Heart right ventricle (tissue), 16 donors: ENCODE measurements at regions of chr1 and their contacts with region 1.

Region 1: GRCh38 chr1:209354111-209354839 is 229.2 kb upstream of the CAMK1G start:
- DNase-seq: peak; percentile 25 to 81
- ATAC-seq: peak; percentile 81 to 94 (median 89)
- H3K4me3 ChIP-seq: no peak overlapping the region
- H3K27ac ChIP-seq: no peak overlapping the region
- H3K4me1 ChIP-seq: peaks cover 0 to 13% (median 0%) of the 10 kb centered on the region in 9 donors
- H3K27me3 ChIP-seq: no peaks in the 10 kb centered on the region
- CTCF ChIP-seq: peak; percentile 55 to 90 (median 84)

Region 2: GRCh38 chr1:209123601-209124000 is 230.7 kb before region 1 on chr1:
- intact Hi-C with region 1: no loop called
- DNase-seq: no peak
- ATAC-seq: no peak
- H3K4me3 ChIP-seq: no peak overlapping the region
- H3K27ac ChIP-seq: no peak overlapping the region
- H3K4me1 ChIP-seq: no peaks in the 10 kb centered on the region
- H3K27me3 ChIP-seq: peaks cover 0 to 6% (median 0%) of the 10 kb centered on the region in 7 donors
- CTCF ChIP-seq: no peak

Region 3: DNA sequence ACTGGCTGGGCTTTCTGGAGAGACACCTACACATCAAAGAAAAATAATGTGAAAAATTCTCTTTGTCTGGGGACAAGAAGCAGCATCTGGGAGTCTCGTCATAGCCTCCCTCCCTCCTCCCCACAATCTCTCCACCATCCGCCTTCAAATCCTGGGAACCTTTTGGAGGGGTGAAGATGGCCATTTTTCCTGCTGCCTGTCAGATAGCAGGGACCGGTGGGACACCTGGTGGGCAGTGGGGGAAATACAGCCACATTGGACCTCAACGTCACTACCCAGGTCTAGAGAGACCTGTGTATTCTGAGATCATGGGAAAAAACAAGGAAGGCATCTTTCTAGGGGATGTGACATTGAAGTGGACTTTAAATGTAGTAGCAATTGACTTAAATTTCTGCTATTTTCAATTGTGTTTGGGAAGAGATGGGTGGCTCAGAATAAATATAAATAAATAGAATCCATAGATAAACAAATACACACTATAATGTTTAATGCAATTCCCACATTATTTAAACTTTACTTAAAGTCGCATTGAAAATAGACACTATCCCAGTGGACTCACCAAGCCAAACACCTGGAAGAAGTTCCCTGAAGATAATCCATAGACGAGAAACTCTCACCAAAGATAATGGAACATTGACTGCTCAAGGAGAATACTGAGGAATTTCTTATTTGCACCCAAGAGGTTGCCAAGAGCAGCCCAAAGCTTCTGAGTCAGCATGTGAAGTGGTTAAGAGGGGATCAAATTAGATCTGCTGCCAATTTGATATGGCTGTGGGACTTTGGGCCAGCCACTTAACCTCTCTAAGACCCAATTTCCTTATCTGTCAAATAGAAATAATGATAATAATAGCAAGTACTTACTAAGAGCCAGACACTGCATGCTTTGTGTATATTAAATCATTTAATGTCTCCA is 81.6 kb after region 1 on chr1:
- intact Hi-C with region 1: loop called in 2 of 10 experiments (anchors 5 kb)
- DNase-seq: peak; percentile 52 to 62
- ATAC-seq: peak in 7 of 8 donors; percentile 47 to 74 (median 67)
- H3K4me3 ChIP-seq: no peak overlapping the region
- H3K27ac ChIP-seq: no peak overlapping the region
- H3K4me1 ChIP-seq: no peaks in the 10 kb centered on the region
- H3K27me3 ChIP-seq: peaks cover 0 to 13% (median 3%) of the 10 kb centered on the region in 7 donors
- CTCF ChIP-seq: peak; percentile 38 to 83 (median 73)

Region 4: DNA sequence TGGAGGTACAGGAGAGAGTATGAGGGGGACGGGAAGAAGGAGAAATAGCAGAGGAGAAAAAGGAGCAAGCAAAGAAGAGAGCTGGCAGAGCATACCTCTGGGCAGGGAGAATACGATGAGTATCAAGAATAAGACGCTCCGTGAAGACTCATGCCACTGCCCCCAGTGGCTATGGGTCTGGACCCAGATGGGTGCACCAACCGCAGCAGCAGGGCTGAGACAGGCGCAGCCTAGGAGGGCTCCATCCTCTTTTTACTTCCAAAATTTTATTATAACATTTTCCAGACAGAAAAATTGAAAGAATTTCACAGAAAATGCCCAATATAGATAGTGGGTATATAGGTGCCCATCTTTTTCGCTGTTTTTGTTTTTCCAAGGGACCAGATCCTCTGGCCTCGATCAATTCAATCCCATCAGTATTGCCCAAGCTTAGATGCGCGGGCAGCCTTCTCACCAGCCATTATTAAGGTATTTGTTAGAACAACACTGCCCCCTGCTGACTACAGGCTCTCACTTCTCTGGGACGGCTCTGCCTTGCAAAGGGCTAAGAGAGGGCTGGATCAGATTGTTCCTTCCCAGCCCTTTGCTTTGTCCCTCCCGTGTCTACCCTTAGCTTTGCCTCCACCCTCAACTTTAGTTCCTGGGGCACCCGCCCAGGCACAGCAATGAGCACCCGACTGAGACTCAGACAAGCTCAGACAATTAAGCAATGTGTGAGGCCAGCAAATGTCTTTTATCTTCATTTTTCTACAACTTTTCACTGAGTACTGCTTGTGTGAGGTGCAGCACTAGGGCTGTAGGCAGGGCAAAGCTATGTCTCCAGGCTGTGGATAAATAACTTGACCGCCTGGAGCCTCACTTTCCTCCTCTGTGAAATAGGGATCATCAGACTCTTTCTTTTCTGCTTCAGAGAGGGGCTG is 211.7 kb after region 1 on chr1:
- intact Hi-C with region 1: loop called in 2 of 10 experiments (anchors 10 kb)
- DNase-seq: peak; percentile 50 to 79
- ATAC-seq: peak; percentile 79 to 91 (median 88)
- H3K4me3 ChIP-seq: no peak overlapping the region
- H3K27ac ChIP-seq: no peak overlapping the region
- H3K4me1 ChIP-seq: peaks cover 0 to 4% (median 0%) of the 10 kb centered on the region in 9 donors
- H3K27me3 ChIP-seq: peaks cover 0 to 32% (median 12%) of the 10 kb centered on the region in 7 donors
- CTCF ChIP-seq: peak; percentile 38 to 83 (median 76)